K562 (cell line): ENCODE measurements at regions of chr17 and their contacts with region 1.

Region 1: GRCh38 chr17:76557368-76558197 is 17.7 kb downstream of the PRCD start:
- DNase-seq: peak; percentile 85 to 98 (median 89)
- ATAC-seq: peak; percentile 92
- H3K4me3 ChIP-seq: peak overlapping the region; percentile 57
- H3K27ac ChIP-seq: peak overlapping the region; percentile 94
- H3K4me1 ChIP-seq: peaks cover 22 to 31% of the 10 kb centered on the region in 2 experiments
- H3K27me3 ChIP-seq: no peaks in the 10 kb centered on the region
- CTCF ChIP-seq: peak; percentile 74 to 84 (median 75)
- EP300 ChIP-seq: no peak; the same call in 1 of the 2 replicates
- POLR2A ChIP-seq: peak; percentile 99
- RAD21 ChIP-seq: peak in 1 of 2 experiments; percentile 17; a peak in 1 of 4 replicates

Region 2: DNA sequence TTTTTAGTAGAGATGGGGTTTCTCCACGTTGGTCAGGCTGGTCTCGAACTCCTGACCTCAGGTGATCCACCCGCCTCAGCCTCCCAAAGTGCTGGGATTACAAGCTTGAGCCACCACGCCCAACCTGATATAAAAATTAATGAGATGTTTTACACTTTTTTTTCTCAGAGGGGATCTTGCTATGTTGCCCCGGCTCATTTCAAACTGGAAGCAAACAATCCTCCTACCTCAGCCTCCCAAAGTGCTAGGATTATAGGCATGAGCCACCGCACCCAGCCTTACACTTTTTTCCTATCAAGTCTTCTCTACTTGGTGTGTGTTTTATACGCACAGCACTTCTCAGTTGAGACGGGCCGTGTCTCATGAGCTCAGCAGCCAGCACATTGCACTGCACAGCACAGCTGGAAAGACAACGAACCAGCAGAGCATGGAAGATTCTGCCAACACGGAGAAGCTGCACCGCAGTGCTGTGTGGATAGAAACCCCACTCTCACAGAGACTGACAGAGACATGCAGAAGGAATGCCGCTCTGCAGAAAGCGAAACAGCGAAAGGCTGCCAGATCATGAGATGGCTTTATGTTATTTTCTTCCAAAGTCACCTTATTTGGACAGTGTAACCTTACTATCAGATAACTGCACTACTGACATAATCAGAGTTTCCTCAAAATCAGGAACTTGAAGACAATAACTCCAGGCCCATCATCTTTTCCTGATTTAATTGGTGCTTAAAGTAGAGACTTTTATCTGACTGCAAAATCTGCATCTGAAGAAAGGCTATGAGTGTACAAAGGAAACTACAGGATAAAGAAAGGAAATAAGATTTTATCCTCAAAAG is 243.0 kb before region 1 on chr17:
- CTCF ChIA-PET with region 1: no interaction called
- POLR2A ChIA-PET with region 1: no interaction called
- in situ Hi-C with region 1: no loop called
- intact Hi-C with region 1: no loop called
- DNase-seq: no peak
- ATAC-seq: no peak
- H3K4me3 ChIP-seq: no peak overlapping the region
- H3K27ac ChIP-seq: no peak overlapping the region
- H3K4me1 ChIP-seq: no peaks in the 10 kb centered on the region; a peak in 1 of 5 replicates
- H3K27me3 ChIP-seq: no peaks in the 10 kb centered on the region
- CTCF ChIP-seq: no peak
- EP300 ChIP-seq: no peak
- POLR2A ChIP-seq: no peak
- RAD21 ChIP-seq: no peak

Region 3: DNA sequence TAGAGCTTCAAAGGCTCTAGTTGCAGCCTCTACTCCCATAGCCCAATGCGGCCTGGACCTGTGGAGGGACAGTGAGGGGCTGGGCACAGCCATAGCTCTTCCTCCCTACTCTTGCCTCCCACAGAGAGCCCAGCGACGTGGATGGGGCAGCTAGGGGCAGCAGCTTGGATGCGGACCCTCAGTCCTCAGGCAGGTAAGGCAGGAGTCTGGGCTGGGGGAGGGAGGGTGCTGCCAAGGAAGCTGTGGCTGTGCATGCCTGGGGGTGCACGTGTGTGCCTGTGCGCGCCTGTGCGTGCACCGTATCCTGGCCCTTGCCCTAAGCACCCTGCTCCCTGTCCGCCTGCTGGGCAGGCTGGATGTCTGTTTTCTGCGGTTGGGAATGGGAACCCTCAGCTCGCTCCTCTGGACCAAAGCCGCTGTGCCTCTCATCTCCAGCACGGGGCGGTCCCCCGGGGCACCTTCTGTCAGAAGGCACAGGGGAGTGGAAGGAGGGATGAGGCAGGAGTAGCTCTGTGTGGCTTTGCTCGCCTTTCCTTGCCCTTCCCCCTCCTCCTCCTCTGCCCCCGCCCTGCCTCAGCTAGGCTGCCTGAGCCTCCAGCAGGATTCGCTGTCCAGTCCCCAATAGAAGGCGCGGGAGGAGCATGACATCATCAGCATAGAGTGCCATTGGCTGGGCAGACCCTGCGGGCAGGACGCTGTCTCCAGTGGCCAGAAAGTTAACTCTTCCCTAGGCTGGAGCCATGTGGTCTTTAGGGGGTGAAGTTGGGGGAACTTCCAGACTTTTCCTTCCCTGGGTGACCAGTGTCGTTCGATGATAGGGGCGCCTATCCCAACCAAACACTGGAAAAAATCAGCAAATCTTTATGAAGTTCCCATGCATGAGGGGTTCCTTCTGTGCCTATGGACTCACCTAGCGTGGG is 16.9 kb before region 1 on chr17:
- CTCF ChIA-PET with region 1: interaction called, 3 read pairs
- POLR2A ChIA-PET with region 1: interaction called, 26 read pairs
- in situ Hi-C with region 1: no loop called
- intact Hi-C with region 1: no loop called
- DNase-seq: peak; percentile 97 to 98 (median 98)
- ATAC-seq: peak; percentile 100
- H3K4me3 ChIP-seq: 0 out of 2 replicates have a peak overlapping the region, but pooled peaks have one; percentile 7
- H3K27ac ChIP-seq: peak overlapping the region; percentile 65
- H3K4me1 ChIP-seq: peaks cover 11 to 56% of the 10 kb centered on the region in 2 experiments; a peak in 4 of 5 replicates
- H3K27me3 ChIP-seq: no peaks in the 10 kb centered on the region
- CTCF ChIP-seq: peak; percentile 1 to 19 (median 9); a peak in 3 of 6 replicates
- EP300 ChIP-seq: no peak
- POLR2A ChIP-seq: peak; percentile 64
- RAD21 ChIP-seq: no peak

Region 4: DNA sequence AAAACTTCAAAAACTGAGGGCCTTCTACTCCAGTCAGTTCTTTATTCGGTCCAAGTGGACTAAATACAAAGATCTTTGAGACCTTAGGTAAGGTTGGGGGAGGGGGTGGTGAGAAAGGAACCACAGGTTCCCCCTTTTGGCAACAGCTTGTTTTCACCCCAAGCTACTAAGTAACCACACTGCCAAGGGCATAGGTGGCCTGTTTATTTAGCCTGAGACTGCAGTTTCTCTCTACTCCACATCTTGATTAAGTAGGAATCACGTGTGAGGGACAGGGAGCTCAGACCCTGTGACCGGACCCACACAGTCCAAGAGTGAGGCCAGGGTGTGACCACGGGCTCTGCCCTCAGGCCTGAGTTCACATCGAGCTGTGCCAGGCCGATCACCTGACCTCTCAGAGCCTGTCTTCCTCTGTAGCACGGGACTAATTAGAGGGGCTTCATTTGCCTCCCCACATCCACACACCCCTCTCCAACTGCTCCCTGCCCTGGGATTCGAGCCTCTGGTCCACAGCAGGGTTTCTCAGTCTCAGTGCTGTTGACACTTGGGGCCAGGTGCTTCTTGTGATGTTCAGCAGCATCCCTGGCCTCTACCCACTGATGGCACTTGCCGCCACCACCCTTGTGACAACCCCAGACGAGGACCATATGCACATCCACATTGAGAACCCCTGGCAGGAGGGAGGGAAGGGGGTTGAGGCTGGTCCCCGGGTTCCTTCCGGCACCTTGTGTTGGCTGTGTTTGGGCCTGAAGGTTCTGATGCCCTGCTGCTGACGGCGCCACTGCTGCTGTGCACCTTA is 10.2 kb after region 1 on chr17:
- CTCF ChIA-PET with region 1: no interaction called
- POLR2A ChIA-PET with region 1: interaction called, 48 read pairs
- in situ Hi-C with region 1: no loop called
- intact Hi-C with region 1: no loop called
- DNase-seq: peak in 3 of 4 experiments; percentile 18 to 31 (median 30)
- ATAC-seq: peak; percentile 28
- H3K4me3 ChIP-seq: no peak overlapping the region
- H3K27ac ChIP-seq: peak overlapping the region; percentile 3; the same call in 1 of the 3 replicates
- H3K4me1 ChIP-seq: peaks cover 16 to 37% of the 10 kb centered on the region in 2 experiments; a peak in 4 of 5 replicates
- H3K27me3 ChIP-seq: no peaks in the 10 kb centered on the region
- CTCF ChIP-seq: no peak
- EP300 ChIP-seq: no peak
- POLR2A ChIP-seq: peak; percentile 45; the same call in 1 of the 2 replicates
- RAD21 ChIP-seq: no peak

Region 5: DNA sequence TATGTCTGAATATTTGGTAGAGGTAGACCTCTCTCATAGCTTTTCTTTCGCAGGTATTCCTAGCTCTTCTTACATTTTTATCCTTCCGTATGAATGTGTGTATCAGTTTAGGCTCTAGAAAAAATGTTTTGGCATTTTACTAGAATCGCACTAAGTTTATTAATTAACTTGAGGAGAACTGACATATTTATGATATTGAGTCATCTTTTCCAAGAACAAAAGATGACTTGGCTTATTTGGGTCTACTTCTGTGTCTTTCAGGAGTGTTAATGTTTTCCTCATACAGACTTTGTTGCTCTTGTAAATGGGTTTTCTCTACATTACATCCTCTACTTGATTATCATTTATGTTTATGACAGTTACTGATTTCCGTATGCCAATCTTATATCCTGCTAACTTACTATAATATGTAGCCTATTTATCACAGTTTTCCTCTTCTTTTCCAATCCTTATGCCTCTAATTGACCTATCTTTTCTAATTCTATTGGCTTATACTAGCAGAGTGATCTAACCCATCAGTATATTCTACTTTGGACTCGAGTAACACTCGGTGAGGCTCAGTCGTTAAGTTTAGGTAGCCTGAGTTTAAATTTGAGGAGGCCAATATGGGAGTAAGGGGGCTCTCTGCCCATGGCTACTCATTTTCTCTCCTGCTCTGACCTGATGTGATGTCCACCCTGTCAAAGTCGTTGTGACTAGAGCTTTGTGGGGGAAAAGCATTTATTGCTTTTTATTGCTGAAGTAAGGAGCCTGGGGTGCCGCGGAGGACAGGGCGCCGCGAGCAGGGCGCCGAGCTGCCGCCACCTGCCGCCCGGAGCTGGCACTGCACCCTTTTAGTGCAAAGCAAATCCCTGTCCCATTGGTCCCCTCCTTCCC is 65.9 kb after region 1 on chr17:
- CTCF ChIA-PET with region 1: interaction called, 10 read pairs
- POLR2A ChIA-PET with region 1: interaction called, 14 read pairs
- in situ Hi-C with region 1: no loop called
- intact Hi-C with region 1: loop called (anchors 1 kb)
- DNase-seq: peak; percentile 74 to 84 (median 78)
- ATAC-seq: peak; percentile 95
- H3K4me3 ChIP-seq: no peak overlapping the region
- H3K27ac ChIP-seq: peak overlapping the region; percentile 54; the same call in 2 of the 3 replicates
- H3K4me1 ChIP-seq: peaks cover 5 to 8% of the 10 kb centered on the region in 2 experiments; a peak in 4 of 5 replicates
- H3K27me3 ChIP-seq: no peaks in the 10 kb centered on the region
- CTCF ChIP-seq: peak; percentile 91 to 94 (median 93)
- EP300 ChIP-seq: peak; percentile 13; the same call in 1 of the 2 replicates
- POLR2A ChIP-seq: no peak; the same call in 1 of the 2 replicates
- RAD21 ChIP-seq: peak; percentile 87 to 92